GM12878 (cell line): ENCODE measurements at regions of chr6 and their contacts with region 1.

Region 1: GRCh38 chr6:144162977-144163376 is 12.7 kb downstream of the STX11 start:
- DNase-seq: no peak
- ATAC-seq: peak; percentile 87
- H3K4me3 ChIP-seq: peak overlapping the region; percentile 19; the same call in 1 of the 2 replicates
- H3K27ac ChIP-seq: peak overlapping the region; percentile 75
- H3K4me1 ChIP-seq: peaks cover 6% of the 10 kb centered on the region; the same call in 1 of the 2 replicates
- H3K27me3 ChIP-seq: no peaks in the 10 kb centered on the region
- CTCF ChIP-seq: no peak
- EP300 ChIP-seq: no peak; a peak in 1 of 4 replicates
- POLR2A ChIP-seq: no peak
- RAD21 ChIP-seq: no peak

Region 2: GRCh38 chr6:144131248-144131709 is 31.7 kb before region 1 on chr6:
- CTCF ChIA-PET with region 1: no interaction called
- POLR2A ChIA-PET with region 1: no interaction called
- RAD21 ChIA-PET with region 1: no interaction called
- SMC1A ChIA-PET with region 1: no interaction called
- in situ Hi-C with region 1: no loop called
- intact Hi-C with region 1: no loop called
- DNase-seq: no peak
- ATAC-seq: peak; percentile 85
- H3K4me3 ChIP-seq: no peak overlapping the region
- H3K27ac ChIP-seq: no peak overlapping the region
- H3K4me1 ChIP-seq: peaks cover 5% of the 10 kb centered on the region
- H3K27me3 ChIP-seq: no peaks in the 10 kb centered on the region
- CTCF ChIP-seq: no peak
- EP300 ChIP-seq: no peak; a peak in 1 of 4 replicates
- POLR2A ChIP-seq: no peak
- RAD21 ChIP-seq: no peak

Region 3: GRCh38 chr6:144174006-144174405 is 11.0 kb after region 1 on chr6:
- CTCF ChIA-PET with region 1: interaction called, 7 read pairs
- POLR2A ChIA-PET with region 1: interaction called, 4 read pairs
- RAD21 ChIA-PET with region 1: interaction called, 4 read pairs
- SMC1A ChIA-PET with region 1: interaction called, 19 read pairs
- in situ Hi-C with region 1: no loop called
- intact Hi-C with region 1: no loop called
- DNase-seq: no peak
- ATAC-seq: no peak
- H3K4me3 ChIP-seq: no peak overlapping the region
- H3K27ac ChIP-seq: no peak overlapping the region
- H3K4me1 ChIP-seq: peaks cover 4% of the 10 kb centered on the region
- H3K27me3 ChIP-seq: no peaks in the 10 kb centered on the region
- CTCF ChIP-seq: no peak
- EP300 ChIP-seq: no peak
- POLR2A ChIP-seq: no peak
- RAD21 ChIP-seq: no peak